GM10248 (cell line): ENCODE measurements at regions of chr1 and their contacts with region 1.

Region 1: GRCh38 chr1:55277377-55278130 is 62.4 kb upstream of the USP24 start:
- DNase-seq: peak; percentile 75
- CTCF ChIP-seq: peak; percentile 92

Region 2: GRCh38 chr1:55103891-55104290 is 173.7 kb before region 1 on chr1:
- CTCF ChIA-PET with region 1: no interaction called
- POLR2A ChIA-PET with region 1: no interaction called
- DNase-seq: no peak
- CTCF ChIP-seq: no peak

Region 3: GRCh38 chr1:55140546-55140983 is 137.0 kb before region 1 on chr1:
- CTCF ChIA-PET with region 1: interaction called, 66 read pairs
- POLR2A ChIA-PET with region 1: no interaction called
- DNase-seq: peak; percentile 47
- CTCF ChIP-seq: peak; percentile 71

Region 4: DNA sequence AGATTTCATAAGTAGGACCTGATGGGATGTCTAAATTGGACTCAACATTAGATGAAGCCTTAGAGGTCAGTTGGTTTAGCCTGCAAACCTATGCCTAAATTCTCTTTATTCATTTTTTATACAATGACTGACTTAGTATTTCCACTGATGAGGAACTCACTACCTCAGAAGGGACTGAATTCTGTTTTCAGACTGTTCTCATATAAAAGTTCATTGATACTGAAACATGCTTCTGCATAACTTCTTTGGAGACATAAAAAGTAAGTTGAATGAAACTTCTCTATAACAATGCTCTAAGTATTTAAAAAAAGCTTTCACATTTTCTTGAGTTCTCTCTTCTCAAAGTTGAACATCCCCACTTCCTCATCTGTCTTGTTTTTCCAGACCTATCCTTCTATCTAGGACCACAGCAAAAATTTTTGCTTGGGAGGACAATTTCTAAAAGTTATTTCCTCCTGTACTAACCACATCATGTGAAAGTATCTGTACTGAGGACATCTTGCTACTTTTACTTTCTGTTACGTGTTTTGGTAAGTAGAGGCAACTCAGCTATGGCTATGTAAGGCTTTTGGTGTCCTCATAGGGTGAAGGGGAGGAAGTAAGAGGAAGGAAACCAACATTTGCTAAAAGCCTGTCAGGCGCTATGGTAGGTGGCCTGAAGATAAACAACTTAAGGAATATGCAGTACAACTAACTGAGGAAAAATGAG is 126.5 kb before region 1 on chr1:
- CTCF ChIA-PET with region 1: interaction called, 10 read pairs
- POLR2A ChIA-PET with region 1: no interaction called
- DNase-seq: peak; percentile 17
- CTCF ChIP-seq: no peak

Region 5: DNA sequence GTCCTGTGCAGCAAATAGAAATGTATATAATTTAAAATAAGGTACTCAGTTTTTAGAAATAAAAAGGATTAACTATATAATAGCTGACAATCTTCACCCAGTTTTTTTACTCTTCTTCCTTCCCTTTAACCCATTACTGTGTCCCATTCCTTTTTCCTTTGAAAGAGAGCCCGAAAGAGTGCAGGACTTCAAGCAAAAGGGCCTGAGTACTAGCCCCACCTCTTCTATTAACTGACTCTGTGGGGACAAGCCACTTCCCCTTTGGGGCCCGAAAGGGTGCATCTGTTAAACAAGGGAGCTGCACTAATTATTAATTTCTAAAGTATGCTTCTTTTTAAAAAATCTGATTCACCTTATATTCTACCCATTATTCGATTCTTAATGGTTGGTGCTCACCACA is 65.7 kb before region 1 on chr1:
- CTCF ChIA-PET with region 1: interaction called, 13 read pairs
- POLR2A ChIA-PET with region 1: no interaction called
- DNase-seq: peak; percentile 44
- CTCF ChIP-seq: no peak

Region 6: GRCh38 chr1:55250399-55251075 is 27.0 kb before region 1 on chr1:
- CTCF ChIA-PET with region 1: interaction called, 24 read pairs
- POLR2A ChIA-PET with region 1: no interaction called
- DNase-seq: no peak
- CTCF ChIP-seq: no peak

Region 7: GRCh38 chr1:55257958-55258357 is 19.6 kb before region 1 on chr1:
- CTCF ChIA-PET with region 1: interaction called, 24 read pairs
- POLR2A ChIA-PET with region 1: no interaction called
- DNase-seq: peak; percentile 47
- CTCF ChIP-seq: no peak

Region 8: GRCh38 chr1:55310505-55310971 is 33.0 kb after region 1 on chr1:
- CTCF ChIA-PET with region 1: no interaction called
- POLR2A ChIA-PET with region 1: no interaction called
- DNase-seq: no peak
- CTCF ChIP-seq: no peak